GM10248 (cell line): ENCODE measurements at regions of chr14 and their contacts with region 1.

Region 1: GRCh38 chr14:22570132-22570949 is 18.7 kb downstream of the DAD1 start:
- DNase-seq: peak; percentile 81
- CTCF ChIP-seq: peak; percentile 93

Region 2: GRCh38 chr14:22177870-22178269 is 392.5 kb before region 1 on chr14:
- CTCF ChIA-PET with region 1: no interaction called
- POLR2A ChIA-PET with region 1: no interaction called
- DNase-seq: no peak
- CTCF ChIP-seq: no peak

Region 3: GRCh38 chr14:22460461-22461195 is 109.7 kb before region 1 on chr14:
- CTCF ChIA-PET with region 1: interaction called, 18 read pairs
- POLR2A ChIA-PET with region 1: no interaction called
- DNase-seq: peak; percentile 37
- CTCF ChIP-seq: no peak

Region 4: GRCh38 chr14:22497144-22497423 is 73.3 kb before region 1 on chr14:
- CTCF ChIA-PET with region 1: interaction called, 18 read pairs
- POLR2A ChIA-PET with region 1: no interaction called
- DNase-seq: no peak
- CTCF ChIP-seq: no peak

Region 5: GRCh38 chr14:22556990-22557623 is 13.2 kb before region 1 on chr14:
- CTCF ChIA-PET with region 1: interaction called, 210 read pairs
- POLR2A ChIA-PET with region 1: interaction called, 7 read pairs
- DNase-seq: peak; percentile 77
- CTCF ChIP-seq: peak; percentile 92

Region 6: DNA sequence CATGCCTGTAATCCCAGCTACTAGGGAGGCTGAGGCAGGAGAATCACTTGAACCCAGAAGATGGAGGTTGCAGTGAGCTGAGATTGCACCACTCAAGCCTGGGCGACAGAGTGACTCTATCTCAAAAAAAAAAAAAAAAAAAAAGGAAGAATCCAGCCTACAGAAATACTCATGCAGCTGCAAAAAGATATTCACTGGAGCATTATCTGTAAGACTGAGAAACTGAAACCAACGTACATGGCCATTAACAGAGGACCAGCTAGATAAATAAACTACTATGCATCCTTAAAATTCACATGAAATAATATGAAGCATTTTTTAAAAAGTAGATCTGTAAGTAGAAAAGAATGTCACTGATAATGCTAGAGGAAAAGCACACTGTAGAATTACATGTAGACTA is 241.4 kb after region 1 on chr14:
- CTCF ChIA-PET with region 1: interaction called, 13 read pairs
- POLR2A ChIA-PET with region 1: no interaction called
- DNase-seq: no peak
- CTCF ChIP-seq: no peak

Region 7: GRCh38 chr14:22900081-22900799 is 329.9 kb after region 1 on chr14:
- CTCF ChIA-PET with region 1: interaction called, 32 read pairs
- POLR2A ChIA-PET with region 1: no interaction called
- DNase-seq: peak; percentile 70
- CTCF ChIP-seq: peak; percentile 59